Endothelial cell of umbilical vein (primary cell): ENCODE measurements at regions of chr16 and their contacts with region 1.

Region 1: GRCh38 chr16:58515125-58515870 is at the start of gene SETD6:
- DNase-seq: peak; percentile 90
- H3K4me3 ChIP-seq: peak within 1 kb of the TSS; percentile 32 to 70 (median 63)
- H3K27ac ChIP-seq: peak within 1 kb of the TSS; percentile 50
- H3K4me1 ChIP-seq: peaks cover 12% of the 10 kb centered on the region
- H3K27me3 ChIP-seq: no peaks in the 10 kb centered on the region
- CTCF ChIP-seq: peak in 1 of 2 donors; percentile 23
- POLR2A ChIP-seq: peak; percentile 80
- total RNA-seq, gene SETD6: 10.4 and 16.4 TPM in 2 replicates

Region 2: DNA sequence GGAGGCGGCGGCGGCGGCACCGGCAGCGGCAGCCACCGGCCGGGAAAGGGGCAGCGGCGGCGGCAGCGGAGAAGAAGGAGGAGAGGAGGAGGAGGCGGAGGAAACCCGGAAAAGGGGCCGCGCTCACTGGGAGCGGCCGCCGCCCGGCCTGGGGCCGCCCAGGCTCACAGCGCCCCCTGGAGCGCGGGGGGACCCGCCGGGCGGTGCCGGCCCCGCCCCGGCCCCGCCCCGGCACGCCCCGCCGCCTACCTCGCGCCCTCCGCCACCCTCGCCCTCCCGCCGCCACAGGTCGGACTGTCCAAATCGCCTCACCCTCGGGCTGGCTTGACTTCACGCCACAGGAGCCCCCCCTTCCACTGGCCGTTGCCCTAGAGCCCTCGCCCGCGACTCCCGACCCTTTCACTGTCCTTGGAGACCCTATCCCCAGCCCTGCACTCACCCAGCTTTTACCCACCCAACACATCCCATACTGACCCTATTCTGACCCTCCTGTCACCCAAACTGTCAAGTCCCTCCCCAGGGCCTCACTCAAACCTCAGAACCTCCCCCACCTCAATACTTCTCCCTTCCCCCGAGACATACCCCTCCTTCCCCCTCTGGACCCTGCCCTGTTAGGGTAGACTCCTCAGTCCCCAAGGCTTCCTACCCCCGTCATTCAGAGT is 317.1 kb before region 1 on chr16 and contains the start of gene CSNK2A2:
- CTCF ChIA-PET with region 1: no interaction called
- POLR2A ChIA-PET with region 1: no interaction called
- dilution Hi-C with region 1: no loop called
- intact Hi-C with region 1: no loop called
- DNase-seq: no peak
- H3K4me3 ChIP-seq: peak within 1 kb of the TSS; percentile 51 to 95 (median 77)
- H3K27ac ChIP-seq: peak within 1 kb of the TSS; percentile 33
- H3K4me1 ChIP-seq: peaks cover 17% of the 10 kb centered on the region
- H3K27me3 ChIP-seq: peaks cover 0 to 6% of the 10 kb centered on the region in 2 experiments
- CTCF ChIP-seq: peak; percentile 25 to 58
- POLR2A ChIP-seq: no peak
- total RNA-seq, gene CSNK2A2: 113 and 125 TPM in 2 replicates

Region 3: GRCh38 chr16:58409316-58409973 is 105.9 kb before region 1 on chr16:
- CTCF ChIA-PET with region 1: no interaction called
- POLR2A ChIA-PET with region 1: no interaction called
- dilution Hi-C with region 1: no loop called
- intact Hi-C with region 1: no loop called
- DNase-seq: peak; percentile 90
- H3K4me3 ChIP-seq: no peak overlapping the region
- H3K27ac ChIP-seq: peak overlapping the region; percentile 79
- H3K4me1 ChIP-seq: peaks cover 15% of the 10 kb centered on the region
- H3K27me3 ChIP-seq: no peaks in the 10 kb centered on the region
- CTCF ChIP-seq: no peak
- POLR2A ChIP-seq: no peak

Region 4: GRCh38 chr16:58494981-58495520 is 20.2 kb before region 1 on chr16:
- CTCF ChIA-PET with region 1: interaction called, 10 read pairs
- POLR2A ChIA-PET with region 1: no interaction called
- dilution Hi-C with region 1: no loop called
- intact Hi-C with region 1: no loop called
- DNase-seq: peak; percentile 88
- H3K4me3 ChIP-seq: no peak overlapping the region
- H3K27ac ChIP-seq: peak overlapping the region; percentile 19
- H3K4me1 ChIP-seq: no peaks in the 10 kb centered on the region
- H3K27me3 ChIP-seq: no peaks in the 10 kb centered on the region
- CTCF ChIP-seq: peak; percentile 51 to 61
- POLR2A ChIP-seq: no peak

Region 5: GRCh38 chr16:58716468-58716867 is 201.2 kb after region 1 on chr16:
- CTCF ChIA-PET with region 1: no interaction called
- POLR2A ChIA-PET with region 1: no interaction called
- dilution Hi-C with region 1: no loop called
- intact Hi-C with region 1: no loop called
- DNase-seq: no peak
- H3K4me3 ChIP-seq: no peak overlapping the region
- H3K27ac ChIP-seq: no peak overlapping the region
- H3K4me1 ChIP-seq: no peaks in the 10 kb centered on the region
- H3K27me3 ChIP-seq: no peaks in the 10 kb centered on the region
- CTCF ChIP-seq: no peak
- POLR2A ChIP-seq: no peak